ENCODE measurements at regions of chr6 and their contacts with region 1.

Region 1: DNA sequence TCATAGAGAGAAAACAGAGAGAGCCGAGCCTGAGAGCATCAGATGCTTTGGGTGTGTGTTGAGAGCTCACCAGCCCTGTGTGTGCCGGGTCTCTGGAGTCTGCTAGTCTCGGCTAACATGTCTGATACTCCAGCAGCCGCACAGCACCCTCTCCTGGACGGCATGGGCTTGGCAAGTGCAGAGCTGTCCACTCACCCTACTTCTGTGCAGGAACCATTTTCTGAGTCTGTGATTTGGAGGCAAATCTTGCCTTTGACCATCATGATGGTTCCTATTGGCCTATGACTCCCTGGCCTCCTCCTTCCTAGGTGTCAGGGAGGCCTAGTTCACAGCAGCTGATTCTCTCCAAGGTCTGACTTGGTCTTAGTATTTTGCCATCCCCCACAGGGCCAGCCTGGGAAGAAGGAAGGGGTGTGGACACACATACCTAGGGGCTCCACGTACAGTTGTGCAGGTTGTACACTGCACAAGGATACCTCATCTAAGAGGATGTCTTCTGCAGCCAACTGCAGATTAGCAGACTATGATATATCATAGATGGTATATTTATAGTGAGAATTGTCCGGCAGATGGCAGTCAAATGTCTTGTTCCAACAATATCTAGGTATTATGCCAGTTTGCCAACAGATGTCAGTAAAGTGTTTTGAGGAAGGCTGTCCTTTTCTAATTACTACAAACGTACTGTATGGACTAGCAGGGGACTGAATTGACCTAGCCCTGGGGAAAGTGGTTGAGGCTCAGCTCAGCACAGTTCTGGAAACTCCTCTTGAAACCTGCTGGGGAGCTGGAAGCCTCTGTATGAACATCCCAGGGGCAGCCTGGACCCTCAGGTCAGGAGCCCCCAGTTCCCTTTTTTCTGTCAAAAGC is 13.0 kb downstream of the FGD2 start:
- DNase-seq: peak; percentile 72 to 80
- ATAC-seq: peak; percentile 93 to 97
- H3K4me3 ChIP-seq: no peak overlapping the region
- H3K27ac ChIP-seq: peak overlapping the region; percentile 48 to 76; a peak in 4 of 6 replicates
- H3K4me1 ChIP-seq: peaks cover 24% of the 10 kb centered on the region
- CTCF ChIP-seq: peak; percentile 91
- EP300 ChIP-seq: no peak
- POLR2A ChIP-seq: no peak
- RAD21 ChIP-seq: peak; percentile 75 to 85

Region 2: GRCh38 chr6:36765594-36766398 is 252.6 kb before region 1 on chr6:
- CTCF ChIA-PET with region 1: interaction called, 112 read pairs
- POLR2A ChIA-PET with region 1: no interaction called
- DNase-seq: peak; percentile 68 to 71
- ATAC-seq: peak; percentile 92 to 98
- H3K4me3 ChIP-seq: no peak overlapping the region
- H3K27ac ChIP-seq: no peak overlapping the region
- H3K4me1 ChIP-seq: no peaks in the 10 kb centered on the region
- CTCF ChIP-seq: peak; percentile 68
- EP300 ChIP-seq: no peak
- POLR2A ChIP-seq: no peak
- RAD21 ChIP-seq: peak; percentile 80 to 91

Region 3: DNA sequence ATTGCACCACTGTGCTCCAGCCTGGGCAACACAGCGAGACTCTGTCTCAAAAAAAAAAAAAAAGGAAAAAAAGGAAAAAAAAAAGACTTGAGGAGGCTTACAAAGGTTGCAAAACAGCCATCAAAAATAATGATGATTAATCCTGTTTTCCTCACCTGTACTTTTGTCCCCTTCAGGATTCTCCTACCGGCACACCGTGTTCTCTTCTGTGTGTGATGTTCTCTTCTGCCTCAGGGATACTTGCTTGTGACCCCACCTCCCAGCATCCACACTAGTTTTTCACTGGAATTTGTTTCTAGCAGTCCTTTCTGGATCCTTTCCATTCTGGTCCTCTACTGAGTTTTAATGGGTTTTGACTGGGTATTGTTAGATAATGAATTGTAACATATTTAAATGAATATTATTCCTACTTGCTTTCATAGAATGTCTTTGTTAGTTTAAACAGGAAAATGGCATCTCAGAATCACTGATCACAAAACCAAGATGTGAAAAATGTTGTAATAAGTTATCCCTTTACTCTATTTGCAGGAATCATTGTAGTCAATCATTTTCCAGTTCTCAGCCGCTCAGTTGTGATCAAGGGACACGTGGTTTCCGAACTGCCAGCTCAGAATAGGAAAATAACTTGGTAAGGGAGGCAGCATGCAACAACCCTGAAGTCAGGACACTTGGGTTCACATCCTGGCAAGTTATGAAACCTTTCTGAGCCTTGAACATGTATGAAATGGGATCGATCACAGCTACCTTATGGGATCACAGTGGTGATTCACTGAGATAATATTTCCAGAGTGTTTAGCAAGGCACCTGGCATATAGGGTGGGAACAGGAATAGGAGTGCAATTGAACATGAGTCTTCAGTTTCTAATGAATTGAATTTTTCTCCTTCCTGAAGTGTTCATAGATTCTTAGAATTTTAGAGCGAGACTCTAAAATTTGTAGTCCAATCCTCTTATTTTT is 124.2 kb before region 1 on chr6:
- CTCF ChIA-PET with region 1: interaction called, 12 read pairs
- POLR2A ChIA-PET with region 1: no interaction called
- DNase-seq: no peak
- ATAC-seq: no peak
- H3K4me3 ChIP-seq: no peak overlapping the region
- H3K27ac ChIP-seq: no peak overlapping the region; a peak in 1 of 6 replicates
- H3K4me1 ChIP-seq: no peaks in the 10 kb centered on the region
- CTCF ChIP-seq: no peak
- EP300 ChIP-seq: no peak
- POLR2A ChIP-seq: no peak
- RAD21 ChIP-seq: no peak

Region 4: DNA sequence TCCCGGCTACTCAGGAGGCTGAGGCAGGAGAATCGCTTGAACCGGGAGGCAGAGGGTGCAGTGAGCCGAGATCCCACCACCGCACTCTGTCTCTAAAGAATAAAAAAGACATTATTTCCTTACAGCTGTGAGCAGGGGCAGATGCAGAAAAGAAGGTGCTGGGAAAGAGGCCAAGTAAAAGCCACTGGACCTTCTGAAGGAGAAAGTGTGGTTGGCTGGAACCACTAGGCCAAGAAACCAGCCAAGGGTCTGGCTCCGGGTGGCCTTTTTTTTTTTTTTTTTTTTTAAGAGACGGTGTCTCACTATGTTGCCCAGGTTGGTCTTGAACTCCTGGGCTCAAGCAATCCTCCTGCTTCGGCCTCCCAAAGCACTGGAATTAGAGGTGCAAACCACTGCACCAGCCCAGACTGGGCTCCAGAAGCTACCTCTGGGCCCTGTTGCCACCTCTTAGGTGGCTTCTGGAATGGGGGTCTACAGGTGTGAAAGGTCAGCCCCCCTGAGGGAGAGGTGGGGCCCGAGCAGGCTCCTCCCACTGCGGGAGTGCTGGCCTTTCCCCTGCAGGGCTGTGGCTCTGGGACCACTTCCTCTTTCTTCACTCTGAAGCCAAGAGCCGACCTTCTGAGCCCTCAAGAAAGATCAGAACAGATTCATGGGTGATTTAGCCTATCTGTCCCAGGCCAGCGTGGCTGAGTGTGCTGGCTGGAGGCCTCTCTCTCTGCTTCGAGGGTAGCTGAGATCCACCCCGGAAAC is 13.2 kb before region 1 on chr6 and contains the start of gene FGD2:
- CTCF ChIA-PET with region 1: interaction called, 26 read pairs
- POLR2A ChIA-PET with region 1: no interaction called
- DNase-seq: no peak
- ATAC-seq: no peak
- H3K4me3 ChIP-seq: no peak within 1 kb of the TSS
- H3K27ac ChIP-seq: no peak within 1 kb of the TSS
- H3K4me1 ChIP-seq: no peaks in the 10 kb centered on the region
- CTCF ChIP-seq: no peak
- EP300 ChIP-seq: no peak
- POLR2A ChIP-seq: no peak
- RAD21 ChIP-seq: no peak
- polyA plus RNA-seq, gene FGD2: not detected in 2 replicates

Region 5: DNA sequence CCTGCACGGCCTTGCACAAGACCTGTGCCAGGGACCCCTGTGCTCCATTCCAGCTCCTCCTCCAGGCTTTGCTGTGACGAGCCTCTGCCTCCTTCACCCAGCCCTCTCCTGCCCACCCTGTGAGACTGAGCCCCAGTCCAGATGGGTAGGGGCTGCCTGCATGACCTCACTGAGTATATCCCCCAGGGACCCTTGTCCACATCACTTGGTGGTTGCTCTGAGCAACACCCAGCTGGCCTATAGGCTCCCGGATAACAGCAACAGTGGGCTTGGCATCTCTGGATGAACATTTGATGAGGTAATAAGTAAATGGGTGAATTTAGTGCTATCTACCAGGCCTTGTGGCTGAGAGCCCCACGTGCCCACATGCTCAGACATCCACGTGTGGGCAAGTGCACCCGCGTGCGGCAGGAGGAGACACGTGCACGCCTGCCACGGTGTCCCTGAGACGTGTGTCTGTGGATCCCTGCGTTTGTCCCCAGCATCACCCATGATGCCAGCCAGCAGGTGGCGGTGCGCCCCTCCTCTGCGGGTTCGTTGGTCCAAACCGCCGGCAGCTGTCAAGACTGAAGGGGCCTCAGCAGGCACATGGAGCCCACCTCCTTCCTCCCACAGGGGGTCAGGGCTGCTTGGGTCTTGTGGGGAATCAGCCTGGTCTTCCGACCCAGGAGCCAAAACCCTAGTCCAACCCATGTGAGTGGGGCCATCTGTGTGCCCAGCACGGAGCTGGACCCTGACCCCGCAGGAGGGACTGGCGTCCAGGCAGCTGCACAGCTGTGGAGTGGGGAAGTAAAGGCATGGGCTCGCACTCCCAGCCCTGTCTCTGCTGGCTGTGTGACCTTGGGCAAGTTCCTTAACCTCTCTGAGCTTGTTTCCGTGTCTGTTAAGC is 33.0 kb after region 1 on chr6:
- CTCF ChIA-PET with region 1: interaction called, 371 read pairs
- POLR2A ChIA-PET with region 1: no interaction called
- DNase-seq: peak; percentile 76 to 78
- ATAC-seq: peak; percentile 82 to 89
- H3K4me3 ChIP-seq: no peak overlapping the region
- H3K27ac ChIP-seq: peak overlapping the region; percentile 65 to 74
- H3K4me1 ChIP-seq: peaks cover 32% of the 10 kb centered on the region
- CTCF ChIP-seq: peak; percentile 80
- EP300 ChIP-seq: no peak
- POLR2A ChIP-seq: no peak
- RAD21 ChIP-seq: peak; percentile 95 to 96

Region 6: GRCh38 chr6:37119387-37119886 is 101.0 kb after region 1 on chr6:
- CTCF ChIA-PET with region 1: no interaction called
- POLR2A ChIA-PET with region 1: no interaction called
- DNase-seq: no peak
- ATAC-seq: no peak
- H3K4me3 ChIP-seq: no peak overlapping the region
- H3K27ac ChIP-seq: no peak overlapping the region
- H3K4me1 ChIP-seq: no peaks in the 10 kb centered on the region
- CTCF ChIP-seq: no peak
- EP300 ChIP-seq: no peak
- POLR2A ChIP-seq: no peak
- RAD21 ChIP-seq: no peak

Region 7: GRCh38 chr6:37222125-37222967 is 203.9 kb after region 1 on chr6:
- CTCF ChIA-PET with region 1: interaction called, 546 read pairs
- POLR2A ChIA-PET with region 1: no interaction called
- DNase-seq: peak; percentile 77 to 91
- ATAC-seq: peak; percentile 97 to 98
- H3K4me3 ChIP-seq: peak overlapping the region; percentile 52
- H3K27ac ChIP-seq: peak overlapping the region; percentile 75 to 87
- H3K4me1 ChIP-seq: peaks cover 13% of the 10 kb centered on the region; the same call in 2 of the 3 replicates
- CTCF ChIP-seq: no peak
- EP300 ChIP-seq: no peak
- POLR2A ChIP-seq: peak; percentile 42; the same call in 1 of the 2 replicates
- RAD21 ChIP-seq: no peak